ENCODE measurements at regions of chr5 and their contacts with region 1.

Region 1: DNA sequence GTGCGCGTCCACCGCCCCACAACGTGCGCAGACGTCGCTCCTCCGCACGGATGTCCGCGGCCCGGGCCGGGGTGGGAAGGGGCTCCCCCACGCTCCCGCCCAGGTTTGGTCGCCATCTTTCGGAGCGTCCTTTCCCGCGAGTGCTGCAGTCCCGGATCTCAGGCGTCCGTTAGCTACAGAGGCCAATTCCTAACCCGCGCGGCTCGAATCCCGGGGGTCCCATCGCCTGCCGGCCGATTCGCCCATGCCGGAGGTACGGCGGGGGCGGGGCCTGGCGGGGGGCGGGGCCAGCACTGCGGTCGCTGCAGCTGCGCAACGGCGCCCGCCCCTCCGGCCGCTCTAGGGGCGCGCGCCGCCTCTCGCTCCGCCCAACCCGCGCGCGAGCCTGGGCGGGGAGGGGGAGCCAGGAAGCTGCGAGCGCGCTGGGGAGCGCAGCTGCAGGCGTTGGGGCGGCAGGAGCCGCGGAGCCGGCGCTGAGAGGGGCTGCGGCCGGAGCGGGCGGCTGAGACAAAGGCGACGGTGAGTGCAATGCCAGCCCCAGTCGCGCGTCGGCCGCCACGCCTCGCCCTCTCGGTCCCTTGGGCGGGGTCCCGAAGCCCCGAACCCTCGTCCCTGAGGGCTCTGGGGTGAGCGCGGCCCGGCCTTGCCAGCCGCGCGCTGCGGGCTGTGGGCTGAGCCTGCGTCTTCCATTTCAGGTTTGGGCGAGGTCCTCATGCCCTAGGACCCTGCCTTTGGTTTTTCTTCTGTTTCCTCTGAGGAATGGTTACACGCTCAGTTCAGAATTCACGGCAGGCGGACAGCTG is at the start of gene CDC42SE2:
- DNase-seq: peak; percentile 84 to 93 (median 90)
- H3K4me3 ChIP-seq: peak within 1 kb of the TSS; percentile 97 to 99
- H3K4me3 Mint-ChIP-seq: peak within 1 kb of the TSS; percentile 91 to 95 (median 94)
- H3K27ac ChIP-seq: peak within 1 kb of the TSS; percentile 96
- H3K27ac Mint-ChIP-seq: peak within 1 kb of the TSS; percentile 92 to 98 (median 97)
- H3K4me1 ChIP-seq: peaks cover 63% of the 10 kb centered on the region
- H3K4me1 Mint-ChIP-seq: peaks cover 23 to 63% (median 43%) of the 10 kb centered on the region in 4 donors
- H3K27me3 ChIP-seq: no peaks in the 10 kb centered on the region
- H3K27me3 Mint-ChIP-seq: no peaks in the 10 kb centered on the region
- total RNA-seq, gene CDC42SE2: 298 to 316 TPM

Region 2: DNA sequence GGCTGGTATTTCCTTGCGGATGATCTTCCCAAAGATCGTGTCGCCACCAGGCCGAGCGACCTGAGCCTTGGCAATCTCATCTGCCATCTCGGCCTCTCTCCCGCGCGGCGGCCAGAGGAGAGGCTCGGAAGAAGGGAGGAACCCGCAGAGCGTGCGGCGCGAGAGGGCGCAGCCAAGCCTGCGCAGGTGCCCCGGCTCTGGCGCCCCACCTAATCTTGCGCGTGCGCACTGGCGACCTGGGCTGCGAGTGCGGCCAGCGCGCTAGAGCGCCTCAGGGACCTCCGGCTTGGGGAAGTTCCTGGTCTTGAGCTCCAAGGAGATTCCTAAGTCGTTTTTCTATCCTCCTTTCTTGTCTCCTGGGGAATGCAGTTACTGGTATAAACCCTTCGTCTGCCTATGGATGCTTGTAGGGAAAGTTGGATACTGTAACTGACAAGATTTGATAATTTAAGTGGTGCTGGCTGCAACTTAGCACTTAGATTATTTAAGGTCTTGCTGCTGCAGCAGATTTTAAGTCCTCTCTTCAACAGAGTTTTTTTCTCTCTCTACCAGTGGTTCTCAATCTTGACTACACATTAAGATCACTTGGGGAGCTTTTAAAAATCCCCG is 98.6 kb before region 1 on chr5 and contains the start of gene HINT1:
- CTCF ChIA-PET with region 1: interaction called, 17 read pairs
- POLR2A ChIA-PET with region 1: interaction called, 83 read pairs
- intact Hi-C with region 1: loop called (anchors 1 kb)
- DNase-seq: peak; percentile 86 to 92 (median 91)
- H3K4me3 ChIP-seq: peak within 1 kb of the TSS; percentile 31 to 89
- H3K4me3 Mint-ChIP-seq: peak within 1 kb of the TSS; percentile 94 to 98 (median 98)
- H3K27ac ChIP-seq: peak within 1 kb of the TSS; percentile 96
- H3K27ac Mint-ChIP-seq: peak within 1 kb of the TSS; percentile 89 to 99 (median 98)
- H3K4me1 ChIP-seq: peaks cover 49% of the 10 kb centered on the region
- H3K4me1 Mint-ChIP-seq: peaks cover 37 to 78% (median 52%) of the 10 kb centered on the region in 4 donors
- H3K27me3 ChIP-seq: no peaks in the 10 kb centered on the region
- H3K27me3 Mint-ChIP-seq: no peaks in the 10 kb centered on the region
- total RNA-seq, gene HINT1: 278 to 289 TPM

Region 3: GRCh38 chr5:131252824-131253171 is 11.1 kb before region 1 on chr5:
- CTCF ChIA-PET with region 1: interaction called, 49 read pairs
- POLR2A ChIA-PET with region 1: interaction called, 1,078 read pairs
- intact Hi-C with region 1: loop called (anchors 1 kb)
- DNase-seq: peak; percentile 86 to 95 (median 88)
- H3K4me3 ChIP-seq: peak overlapping the region; percentile 60 to 80
- H3K4me3 Mint-ChIP-seq: peak overlapping the region; percentile 94 to 98 (median 97)
- H3K27ac ChIP-seq: peak overlapping the region; percentile 79
- H3K27ac Mint-ChIP-seq: peak overlapping the region; percentile 92 to 99 (median 97)
- H3K4me1 ChIP-seq: peaks cover 58% of the 10 kb centered on the region
- H3K4me1 Mint-ChIP-seq: peaks cover 46 to 78% (median 54%) of the 10 kb centered on the region in 4 donors
- H3K27me3 ChIP-seq: no peaks in the 10 kb centered on the region
- H3K27me3 Mint-ChIP-seq: no peaks in the 10 kb centered on the region

Region 4: DNA sequence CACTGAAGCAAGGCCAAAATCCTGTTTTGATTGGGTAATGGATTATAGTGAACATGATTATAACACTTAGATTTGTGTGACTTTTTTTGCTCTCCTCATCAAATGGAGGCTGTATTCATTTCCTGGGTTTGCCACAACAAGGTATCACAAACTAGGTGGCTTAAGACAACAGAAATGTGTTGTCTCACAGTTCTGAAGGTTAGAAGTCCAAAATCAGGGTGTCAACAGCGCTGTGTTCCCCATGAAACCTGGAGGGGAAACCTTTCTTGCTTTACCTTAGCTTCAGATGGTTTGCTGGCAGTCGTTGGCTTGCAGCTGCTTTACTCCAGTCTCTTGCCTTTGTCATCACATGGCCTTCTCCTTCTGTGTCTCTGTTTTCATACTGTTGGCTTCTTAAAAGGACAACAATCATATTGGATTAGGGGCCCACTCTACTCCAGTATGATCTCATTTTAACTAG is 32.4 kb after region 1 on chr5:
- CTCF ChIA-PET with region 1: interaction called, 4 read pairs
- POLR2A ChIA-PET with region 1: interaction called, 24 read pairs
- intact Hi-C with region 1: no loop called
- DNase-seq: peak in 3 of 5 donors; percentile 33 to 47 (median 35)
- H3K4me3 ChIP-seq: no peak overlapping the region
- H3K4me3 Mint-ChIP-seq: peak overlapping the region in 7 of 8 donors; percentile 10 to 85 (median 69)
- H3K27ac ChIP-seq: no peak overlapping the region
- H3K27ac Mint-ChIP-seq: peak overlapping the region; percentile 49 to 94 (median 77)
- H3K4me1 ChIP-seq: peaks cover 89% of the 10 kb centered on the region
- H3K4me1 Mint-ChIP-seq: peaks cover 52 to 82% (median 68%) of the 10 kb centered on the region in 4 donors
- H3K27me3 ChIP-seq: no peaks in the 10 kb centered on the region
- H3K27me3 Mint-ChIP-seq: no peaks in the 10 kb centered on the region

Region 5: GRCh38 chr5:131328536-131329285 is 64.9 kb after region 1 on chr5:
- CTCF ChIA-PET with region 1: interaction called, 8 read pairs
- POLR2A ChIA-PET with region 1: interaction called, 23 read pairs
- intact Hi-C with region 1: no loop called
- DNase-seq: no peak
- H3K4me3 ChIP-seq: no peak overlapping the region
- H3K4me3 Mint-ChIP-seq: peak overlapping the region in 4 of 8 donors; percentile 26 to 68 (median 42)
- H3K27ac ChIP-seq: no peak overlapping the region
- H3K27ac Mint-ChIP-seq: peak overlapping the region; percentile 38 to 96 (median 69)
- H3K4me1 ChIP-seq: peaks cover 76% of the 10 kb centered on the region
- H3K4me1 Mint-ChIP-seq: peaks cover 48 to 83% (median 66%) of the 10 kb centered on the region in 4 donors
- H3K27me3 ChIP-seq: no peaks in the 10 kb centered on the region
- H3K27me3 Mint-ChIP-seq: no peaks in the 10 kb centered on the region

Region 6: GRCh38 chr5:131364507-131365050 is 100.7 kb after region 1 on chr5:
- CTCF ChIA-PET with region 1: interaction called, 17 read pairs
- POLR2A ChIA-PET with region 1: interaction called, 22 read pairs
- intact Hi-C with region 1: no loop called
- DNase-seq: peak in 3 of 5 donors; percentile 43 to 50 (median 48)
- H3K4me3 ChIP-seq: no peak overlapping the region
- H3K4me3 Mint-ChIP-seq: peak overlapping the region; percentile 14 to 73 (median 58)
- H3K27ac ChIP-seq: peak overlapping the region; percentile 4
- H3K27ac Mint-ChIP-seq: peak overlapping the region; percentile 56 to 97 (median 79)
- H3K4me1 ChIP-seq: peaks cover 86% of the 10 kb centered on the region
- H3K4me1 Mint-ChIP-seq: peaks cover 51 to 89% (median 72%) of the 10 kb centered on the region in 4 donors
- H3K27me3 ChIP-seq: no peaks in the 10 kb centered on the region
- H3K27me3 Mint-ChIP-seq: no peaks in the 10 kb centered on the region

Region 7: DNA sequence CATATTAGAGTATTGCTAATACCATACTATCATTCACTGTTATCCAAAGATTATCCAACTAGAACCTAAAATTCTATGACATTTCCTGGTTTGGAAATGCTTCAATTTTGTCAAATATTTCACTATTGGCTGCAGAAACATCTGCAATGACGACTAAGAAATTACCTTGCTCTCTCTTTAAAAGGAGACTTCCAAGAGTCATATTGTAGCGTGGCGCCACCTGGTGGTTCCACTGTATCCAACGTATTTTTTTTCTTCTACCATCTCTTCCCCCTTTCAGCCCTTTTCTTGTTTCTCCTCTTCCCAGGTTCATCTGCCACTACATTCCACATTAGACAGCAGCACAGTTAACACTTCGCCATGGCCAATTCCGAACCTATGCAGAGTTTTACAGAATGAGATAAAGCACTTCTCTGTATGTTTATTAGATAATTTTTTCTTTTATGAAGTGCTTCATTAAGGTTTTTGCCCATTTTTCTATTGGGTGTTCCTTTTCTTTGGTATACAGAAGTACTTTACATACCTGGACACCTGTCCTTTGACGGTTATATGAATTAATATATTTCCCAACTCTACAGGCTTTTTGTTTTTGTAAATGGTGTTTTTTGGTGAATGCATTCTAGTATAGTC is 153.5 kb after region 1 on chr5:
- CTCF ChIA-PET with region 1: interaction called, 19 read pairs
- POLR2A ChIA-PET with region 1: interaction called, 23 read pairs
- intact Hi-C with region 1: no loop called
- DNase-seq: peak; percentile 71 to 79 (median 77)
- H3K4me3 ChIP-seq: no peak overlapping the region
- H3K4me3 Mint-ChIP-seq: peak overlapping the region in 7 of 8 donors; percentile 5 to 81 (median 60)
- H3K27ac ChIP-seq: peak overlapping the region; percentile 45
- H3K27ac Mint-ChIP-seq: peak overlapping the region; percentile 68 to 92 (median 85)
- H3K4me1 ChIP-seq: peaks cover 37% of the 10 kb centered on the region
- H3K4me1 Mint-ChIP-seq: peaks cover 35 to 56% (median 46%) of the 10 kb centered on the region in 4 donors
- H3K27me3 ChIP-seq: no peaks in the 10 kb centered on the region
- H3K27me3 Mint-ChIP-seq: no peaks in the 10 kb centered on the region

Region 8: DNA sequence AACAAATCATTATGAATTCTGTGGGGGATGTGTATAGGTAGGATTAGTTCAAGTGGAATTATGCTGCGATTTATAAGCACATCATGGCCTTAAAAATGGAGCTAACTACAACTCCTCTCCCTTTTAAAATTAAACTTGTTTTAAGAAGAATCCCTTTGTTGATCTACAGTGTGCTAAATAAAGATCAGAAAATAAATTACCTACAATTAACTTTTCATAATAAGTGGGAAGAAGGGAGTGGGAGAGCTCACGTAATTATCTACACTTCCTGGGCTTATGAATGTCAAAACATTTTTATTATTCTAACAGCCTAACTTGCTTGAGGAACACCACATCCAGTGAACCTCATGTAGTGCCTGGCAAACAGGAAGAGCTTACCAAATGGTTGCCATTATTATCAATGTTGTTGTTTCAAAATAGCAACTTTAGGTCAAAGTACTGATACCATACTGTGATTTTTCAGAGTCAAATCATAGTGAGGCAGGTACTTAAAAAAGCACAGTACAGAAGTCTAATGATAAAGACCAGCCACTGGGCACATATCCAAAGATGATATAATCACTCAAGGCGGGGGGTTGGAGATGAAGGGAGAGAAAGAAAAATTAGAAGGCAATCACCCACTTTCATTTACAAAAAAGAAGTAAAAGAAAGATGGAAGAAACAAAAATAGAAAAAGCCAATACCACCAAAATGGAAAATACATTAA is 197.2 kb after region 1 on chr5:
- CTCF ChIA-PET with region 1: no interaction called
- POLR2A ChIA-PET with region 1: no interaction called
- intact Hi-C with region 1: no loop called
- DNase-seq: no peak
- H3K4me3 ChIP-seq: no peak overlapping the region
- H3K4me3 Mint-ChIP-seq: peak overlapping the region in 2 of 8 donors; percentile 4 to 75
- H3K27ac ChIP-seq: no peak overlapping the region
- H3K27ac Mint-ChIP-seq: peak overlapping the region; percentile 5 to 82 (median 50)
- H3K4me1 ChIP-seq: peaks cover 26% of the 10 kb centered on the region
- H3K4me1 Mint-ChIP-seq: peaks cover 19 to 42% (median 36%) of the 10 kb centered on the region in 4 donors
- H3K27me3 ChIP-seq: no peaks in the 10 kb centered on the region
- H3K27me3 Mint-ChIP-seq: no peaks in the 10 kb centered on the region